Activated CD8-positive, alpha-beta T cell treated with anti-CD3 and anti-CD28 coated beads for 36 hours (primary cell): ENCODE measurements at regions of chr2 and their contacts with region 1.

Region 1: DNA sequence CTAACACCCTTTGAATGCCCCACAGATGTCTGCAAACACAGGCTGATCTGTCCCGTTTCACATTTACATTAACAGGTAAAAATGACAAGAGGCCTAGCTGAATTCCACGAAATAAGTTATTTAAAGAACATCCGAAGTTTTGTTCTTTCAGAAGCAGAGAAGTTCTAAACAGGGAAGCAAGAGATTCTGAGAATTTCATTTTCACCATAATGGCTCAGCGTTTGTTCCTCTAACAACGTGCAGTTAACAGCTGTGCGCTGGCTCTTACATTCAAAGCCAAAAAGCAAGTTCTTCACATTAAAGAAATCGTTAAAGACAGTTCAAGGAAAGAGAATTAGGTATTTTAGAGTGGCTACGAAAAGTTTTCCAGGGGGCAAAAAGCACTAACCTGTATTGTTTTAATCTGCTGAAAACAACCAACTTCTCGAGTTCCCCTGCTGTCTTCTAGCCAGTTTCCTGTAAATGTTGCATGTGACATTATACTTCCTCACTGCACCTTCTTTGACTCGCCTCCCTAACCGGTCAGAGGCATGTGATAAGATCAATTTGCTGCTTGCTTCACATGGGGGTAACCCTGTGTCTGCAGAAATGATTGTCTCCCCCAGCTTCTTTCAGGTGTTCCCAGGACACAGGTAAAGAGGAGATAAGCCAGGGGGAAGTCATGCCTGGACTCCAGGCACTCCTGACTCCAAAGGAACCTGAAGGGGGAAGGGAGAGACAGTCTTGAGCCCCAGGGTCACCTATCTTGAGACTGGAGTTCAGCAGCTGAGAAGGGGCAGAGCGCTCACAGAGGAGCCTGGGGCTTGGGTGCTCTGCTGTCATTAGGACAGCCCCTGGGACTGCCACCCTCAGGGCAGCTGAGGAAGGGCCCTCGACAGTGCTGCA is 36.8 kb upstream of the WIPF1 start:
- DNase-seq: peak; percentile 77
- ATAC-seq: peak; percentile 80
- H3K4me3 Mint-ChIP-seq: peak overlapping the region; percentile 85
- H3K27ac Mint-ChIP-seq: peak overlapping the region; percentile 99
- H3K4me1 Mint-ChIP-seq: peaks cover 60% of the 10 kb centered on the region
- H3K27me3 Mint-ChIP-seq: no peaks in the 10 kb centered on the region
- CTCF ChIP-seq: no peak

Region 2: DNA sequence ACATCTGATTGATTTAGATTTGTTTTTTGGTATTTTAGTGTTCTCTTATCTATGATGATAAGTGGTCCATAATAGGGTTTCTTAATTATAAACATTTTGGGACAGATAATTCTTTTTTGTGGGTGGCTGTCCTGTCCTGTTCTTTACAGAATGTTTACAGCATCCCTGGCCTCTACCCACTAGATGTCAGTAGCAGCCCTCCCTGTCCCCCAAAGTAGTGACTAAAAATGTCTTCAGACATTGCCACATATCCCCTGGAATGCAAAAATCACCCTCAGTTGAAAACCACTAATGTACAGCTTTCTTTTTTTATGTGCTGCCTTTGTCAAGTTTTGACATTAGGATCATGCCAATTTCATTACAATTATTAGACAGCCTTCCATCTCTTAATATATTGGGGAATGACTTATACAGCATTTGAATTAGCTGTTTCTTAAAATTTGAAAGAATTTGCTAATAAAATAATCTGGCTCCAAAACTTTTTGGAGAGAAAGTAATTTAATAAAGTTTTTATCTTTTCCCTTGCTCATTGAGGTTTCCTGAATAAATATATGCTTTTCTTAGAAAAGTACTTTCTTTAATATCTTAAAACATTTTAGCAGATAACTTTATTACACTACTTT is 56.3 kb before region 1 on chr2:
- CTCF ChIA-PET with region 1: interaction called, 19 read pairs
- POLR2A ChIA-PET with region 1: no interaction called
- intact Hi-C with region 1: no loop called
- DNase-seq: peak; percentile 71
- ATAC-seq: peak; percentile 71
- H3K4me3 Mint-ChIP-seq: no peak overlapping the region
- H3K27ac Mint-ChIP-seq: peak overlapping the region; percentile 49
- H3K4me1 Mint-ChIP-seq: peaks cover 75% of the 10 kb centered on the region
- H3K27me3 Mint-ChIP-seq: no peaks in the 10 kb centered on the region
- CTCF ChIP-seq: peak; percentile 63

Region 3: GRCh38 chr2:174593574-174594203 is 40.7 kb before region 1 on chr2:
- CTCF ChIA-PET with region 1: interaction called, 101 read pairs
- POLR2A ChIA-PET with region 1: interaction called, 198 read pairs
- intact Hi-C with region 1: loop called (anchors 2 kb)
- DNase-seq: peak; percentile 88
- ATAC-seq: peak; percentile 71
- H3K4me3 Mint-ChIP-seq: peak overlapping the region; percentile 87
- H3K27ac Mint-ChIP-seq: peak overlapping the region; percentile 99
- H3K4me1 Mint-ChIP-seq: peaks cover 40% of the 10 kb centered on the region
- H3K27me3 Mint-ChIP-seq: no peaks in the 10 kb centered on the region
- CTCF ChIP-seq: no peak

Region 4: DNA sequence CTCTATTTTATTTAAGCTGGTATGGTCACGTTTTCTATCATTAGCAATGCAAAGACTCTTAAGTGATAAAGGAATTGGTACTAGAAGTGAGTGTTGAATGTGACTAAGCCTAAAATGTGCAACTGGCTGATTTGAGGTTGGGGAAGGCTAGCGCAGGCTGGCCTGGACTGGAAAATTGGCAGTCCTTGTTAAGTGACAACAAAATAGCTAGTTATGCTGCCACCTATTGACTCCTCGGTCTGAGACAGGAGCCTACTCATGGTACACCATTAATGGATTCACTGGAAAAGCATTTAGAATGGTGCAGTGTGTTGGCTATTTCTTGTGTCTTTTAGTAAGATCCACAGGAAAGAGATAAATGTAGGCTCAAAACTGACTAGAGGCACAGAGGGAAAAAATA is 31.1 kb before region 1 on chr2:
- CTCF ChIA-PET with region 1: interaction called, 101 read pairs
- POLR2A ChIA-PET with region 1: interaction called, 283 read pairs
- intact Hi-C with region 1: no loop called
- DNase-seq: peak; percentile 79
- ATAC-seq: peak; percentile 61
- H3K4me3 Mint-ChIP-seq: no peak overlapping the region
- H3K27ac Mint-ChIP-seq: peak overlapping the region; percentile 77
- H3K4me1 Mint-ChIP-seq: peaks cover 91% of the 10 kb centered on the region
- H3K27me3 Mint-ChIP-seq: no peaks in the 10 kb centered on the region
- CTCF ChIP-seq: peak; percentile 76

Region 5: DNA sequence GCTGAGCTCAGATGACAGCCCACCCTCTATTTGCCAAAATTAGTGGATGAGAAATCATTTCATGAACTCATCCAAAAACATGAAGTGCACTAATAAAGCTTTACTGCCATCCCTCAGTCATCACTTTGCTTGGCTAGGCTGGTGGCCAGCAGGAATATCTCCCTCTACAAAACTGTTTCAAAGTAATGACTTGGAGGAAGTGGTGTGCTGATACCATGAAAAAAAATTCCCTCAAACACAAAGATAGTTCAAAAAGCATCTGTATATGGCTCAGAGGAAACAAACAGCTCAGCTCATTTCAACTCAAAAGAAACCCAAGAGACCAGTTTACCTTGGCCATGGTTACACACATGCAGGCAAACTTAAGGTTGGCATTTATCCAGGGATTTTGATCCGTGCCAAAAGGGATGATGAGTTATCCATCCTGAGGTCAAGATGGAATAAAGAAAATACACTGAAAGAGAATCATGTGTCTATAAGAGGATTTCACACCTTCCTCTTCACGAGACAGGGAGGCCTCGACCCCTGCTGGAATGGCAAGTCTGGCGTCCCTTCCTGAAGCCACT is 18.4 kb before region 1 on chr2:
- CTCF ChIA-PET with region 1: interaction called, 11 read pairs
- POLR2A ChIA-PET with region 1: interaction called, 283 read pairs
- intact Hi-C with region 1: loop called (anchors 2 kb)
- DNase-seq: no peak
- ATAC-seq: peak; percentile 41
- H3K4me3 Mint-ChIP-seq: peak overlapping the region; percentile 11
- H3K27ac Mint-ChIP-seq: peak overlapping the region; percentile 93
- H3K4me1 Mint-ChIP-seq: peaks cover 86% of the 10 kb centered on the region
- H3K27me3 Mint-ChIP-seq: no peaks in the 10 kb centered on the region
- CTCF ChIP-seq: no peak

Region 6: DNA sequence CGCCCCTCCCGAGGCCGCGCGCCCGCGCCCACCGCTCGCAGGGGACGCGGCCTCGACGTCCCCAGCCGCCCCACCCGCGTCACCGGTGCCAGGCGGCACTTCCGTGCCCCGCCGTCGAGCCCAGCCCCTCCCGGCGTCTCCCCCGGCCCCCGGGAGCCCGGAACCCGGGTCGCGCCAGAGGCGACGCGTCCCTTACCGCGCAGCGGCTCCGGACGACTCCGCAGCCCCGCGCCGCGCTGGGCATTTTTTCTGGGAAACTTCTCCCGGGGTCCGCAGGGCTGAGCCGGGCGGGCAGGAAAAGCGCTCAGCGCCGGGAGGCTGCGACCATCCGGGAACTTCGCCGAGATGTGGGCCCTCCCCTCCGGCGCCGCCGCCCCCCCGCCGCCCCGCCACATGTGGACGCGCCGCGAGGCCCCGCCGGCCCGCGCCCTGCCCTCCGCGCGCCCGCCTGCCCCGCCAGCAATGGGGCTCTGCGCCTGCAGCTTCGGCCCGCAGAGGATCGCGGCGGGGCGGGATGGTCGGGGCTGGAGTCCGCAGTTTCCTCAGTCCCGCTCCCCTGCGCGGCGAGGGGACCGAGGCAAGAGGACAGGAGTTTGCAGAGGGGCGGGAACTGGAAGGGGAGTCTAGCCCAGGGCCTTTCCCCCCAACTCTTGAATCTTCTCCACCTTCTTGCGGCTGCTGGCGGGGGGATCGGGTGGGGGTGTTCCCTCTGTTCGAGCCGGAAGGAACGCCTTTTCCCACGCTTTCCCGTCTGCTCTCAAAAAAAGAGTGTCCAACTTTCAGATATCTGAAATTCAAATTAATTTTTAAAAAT is 48.4 kb after region 1 on chr2:
- CTCF ChIA-PET with region 1: interaction called, 28 read pairs
- POLR2A ChIA-PET with region 1: interaction called, 15 read pairs
- intact Hi-C with region 1: loop called (anchors 2 kb)
- DNase-seq: peak; percentile 57
- ATAC-seq: peak; percentile 70
- H3K4me3 Mint-ChIP-seq: peak overlapping the region; percentile 88
- H3K27ac Mint-ChIP-seq: peak overlapping the region; percentile 92
- H3K4me1 Mint-ChIP-seq: peaks cover 62% of the 10 kb centered on the region
- H3K27me3 Mint-ChIP-seq: no peaks in the 10 kb centered on the region
- CTCF ChIP-seq: no peak